HEK293T (cell line): ENCODE measurements at regions of chr11 and their contacts with region 1.

Region 1: GRCh38 chr11:120235024-120235861 is 4.7 kb upstream of the POU2F3 start:
- DNase-seq: peak; percentile 81

Region 2: GRCh38 chr11:120248551-120249278 is 13.5 kb after region 1 on chr11:
- CTCF ChIA-PET with region 1: interaction called, 15 read pairs
- POLR2A ChIA-PET with region 1: no interaction called
- DNase-seq: no peak

Region 3: GRCh38 chr11:120301982-120302843 is 67.0 kb after region 1 on chr11:
- CTCF ChIA-PET with region 1: interaction called, 41 read pairs
- POLR2A ChIA-PET with region 1: interaction called, 3 read pairs
- DNase-seq: no peak